HepG2 (cell line): ENCODE measurements at regions of chr5 and their contacts with region 1.

Region 1: DNA sequence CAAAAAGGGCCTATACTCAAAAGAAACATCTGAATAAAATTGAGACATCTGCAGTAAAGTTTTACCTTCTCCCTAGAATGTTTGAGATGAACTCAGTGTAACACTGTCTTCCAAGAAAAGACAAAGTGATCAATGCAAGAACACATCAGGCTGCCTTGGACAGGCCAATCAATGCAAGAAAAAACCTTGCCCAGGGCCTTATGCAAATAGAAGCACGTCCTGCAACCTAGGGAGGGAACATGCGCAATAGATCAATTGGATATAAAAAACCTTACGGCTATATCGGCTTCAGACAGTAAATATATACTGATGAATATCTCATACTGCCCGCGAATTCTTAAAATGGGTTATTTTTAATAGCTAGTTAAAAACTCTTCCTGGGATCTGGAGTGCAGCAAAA is 66.4 kb upstream of the POU5F2 start:
- DNase-seq: no peak
- ATAC-seq: no peak
- H3K4me3 ChIP-seq: no peak overlapping the region
- H3K27ac ChIP-seq: no peak overlapping the region
- H3K4me1 ChIP-seq: no peaks in the 10 kb centered on the region
- H3K27me3 ChIP-seq: no peaks in the 10 kb centered on the region
- CTCF ChIP-seq: no peak
- EP300 ChIP-seq: no peak
- POLR2A ChIP-seq: no peak
- RAD21 ChIP-seq: no peak

Region 2: GRCh38 chr5:93782978-93783377 is 24.9 kb before region 1 on chr5:
- CTCF ChIA-PET with region 1: no interaction called
- POLR2A ChIA-PET with region 1: no interaction called
- in situ Hi-C with region 1: no loop called
- intact Hi-C with region 1: no loop called
- DNase-seq: no peak
- ATAC-seq: no peak
- H3K4me3 ChIP-seq: no peak overlapping the region
- H3K27ac ChIP-seq: no peak overlapping the region
- H3K4me1 ChIP-seq: peaks cover 6% of the 10 kb centered on the region; the same call in 1 of the 2 replicates
- H3K27me3 ChIP-seq: no peaks in the 10 kb centered on the region
- CTCF ChIP-seq: no peak
- EP300 ChIP-seq: no peak
- POLR2A ChIP-seq: no peak
- RAD21 ChIP-seq: no peak

Region 3: GRCh38 chr5:93874080-93874479 is 66.2 kb after region 1 on chr5:
- CTCF ChIA-PET with region 1: no interaction called
- POLR2A ChIA-PET with region 1: no interaction called
- in situ Hi-C with region 1: no loop called
- intact Hi-C with region 1: loop called (anchors 1 kb)
- DNase-seq: no peak
- ATAC-seq: no peak
- H3K4me3 ChIP-seq: no peak overlapping the region
- H3K27ac ChIP-seq: no peak overlapping the region
- H3K4me1 ChIP-seq: no peaks in the 10 kb centered on the region
- H3K27me3 ChIP-seq: no peaks in the 10 kb centered on the region
- CTCF ChIP-seq: no peak
- EP300 ChIP-seq: no peak
- POLR2A ChIP-seq: no peak
- RAD21 ChIP-seq: no peak

Region 4: DNA sequence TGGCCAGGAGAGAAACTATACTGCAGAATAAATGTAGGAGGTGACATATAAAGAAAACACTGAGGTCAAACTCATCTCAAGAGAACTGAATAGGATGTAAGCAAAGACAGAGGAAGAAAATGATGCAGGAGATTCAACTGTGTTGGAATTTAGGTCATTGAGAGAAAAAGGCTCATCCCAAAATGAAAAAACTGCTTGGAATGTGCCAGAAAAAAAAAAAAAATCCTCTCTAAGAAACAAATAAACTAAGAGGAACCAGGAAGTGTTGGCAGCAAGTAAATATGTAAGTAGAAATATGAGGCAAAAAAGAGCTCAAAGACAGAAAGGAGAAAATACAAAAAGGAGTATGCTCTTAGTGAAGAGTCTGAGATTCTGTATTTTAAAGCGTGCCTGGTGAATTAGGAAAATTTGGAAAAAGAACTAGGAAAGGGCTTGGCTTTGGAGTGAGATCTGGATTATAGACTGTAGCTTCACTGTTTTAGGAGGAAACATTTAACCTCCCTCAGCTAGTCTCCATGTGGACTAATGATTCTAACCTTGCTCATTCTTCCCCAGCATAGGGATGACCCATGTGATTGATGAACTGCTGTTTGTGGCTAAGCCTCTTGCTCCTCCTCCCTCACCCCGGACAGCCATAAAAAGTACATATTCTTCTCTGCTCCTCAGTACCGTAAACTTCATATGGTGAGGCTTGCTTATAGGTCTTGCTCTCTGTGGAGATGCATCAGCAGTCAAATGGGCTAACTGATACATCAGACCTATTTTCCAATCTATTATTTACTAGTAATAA is 119.2 kb after region 1 on chr5:
- CTCF ChIA-PET with region 1: no interaction called
- POLR2A ChIA-PET with region 1: no interaction called
- in situ Hi-C with region 1: no loop called
- intact Hi-C with region 1: no loop called
- DNase-seq: no peak
- ATAC-seq: no peak
- H3K4me3 ChIP-seq: no peak overlapping the region
- H3K27ac ChIP-seq: no peak overlapping the region
- H3K4me1 ChIP-seq: no peaks in the 10 kb centered on the region
- H3K27me3 ChIP-seq: no peaks in the 10 kb centered on the region
- CTCF ChIP-seq: no peak
- EP300 ChIP-seq: no peak
- POLR2A ChIP-seq: no peak
- RAD21 ChIP-seq: no peak

Region 5: GRCh38 chr5:94254214-94254613 is 446.4 kb after region 1 on chr5:
- CTCF ChIA-PET with region 1: no interaction called
- POLR2A ChIA-PET with region 1: no interaction called
- in situ Hi-C with region 1: no loop called
- intact Hi-C with region 1: no loop called
- DNase-seq: no peak
- ATAC-seq: no peak
- H3K4me3 ChIP-seq: no peak overlapping the region
- H3K27ac ChIP-seq: no peak overlapping the region
- H3K4me1 ChIP-seq: no peaks in the 10 kb centered on the region
- H3K27me3 ChIP-seq: no peaks in the 10 kb centered on the region
- CTCF ChIP-seq: no peak
- EP300 ChIP-seq: no peak
- POLR2A ChIP-seq: no peak
- RAD21 ChIP-seq: no peak